ENCODE measurements at regions of chrX and their contacts with region 1.

Region 1: DNA sequence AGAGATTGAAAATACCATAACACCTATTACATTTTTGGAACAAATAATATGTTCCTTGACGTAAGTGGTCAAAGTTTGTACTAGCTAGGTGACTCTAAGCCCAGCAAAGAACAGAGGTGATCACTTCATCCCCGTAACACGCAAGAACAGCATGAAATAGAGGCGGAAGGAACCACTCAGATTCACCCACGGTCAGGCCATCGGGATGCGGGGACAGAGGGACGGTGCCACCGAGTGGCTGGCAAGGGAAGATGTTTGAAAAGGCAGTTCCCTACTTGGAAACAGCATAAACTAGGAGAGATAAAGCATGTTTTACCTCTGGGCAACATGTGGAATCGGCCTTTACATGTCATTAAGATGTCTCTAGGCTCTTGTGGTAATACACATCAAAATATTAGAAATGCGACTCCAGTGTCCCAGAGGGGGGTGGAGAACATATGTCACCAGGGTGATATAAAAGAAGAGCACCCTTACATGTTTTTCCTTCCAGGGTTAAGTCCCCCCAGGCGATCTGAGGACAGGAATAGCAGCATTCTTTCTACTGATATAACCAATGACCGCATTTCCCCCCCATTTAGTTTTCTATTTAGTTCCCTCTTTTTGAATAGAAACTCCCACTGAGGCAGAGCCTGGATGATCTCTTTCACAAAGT is 84.0 kb downstream of the PHKA2 start:
- DNase-seq: peak; percentile 48
- CTCF ChIP-seq: no peak

Region 2: DNA sequence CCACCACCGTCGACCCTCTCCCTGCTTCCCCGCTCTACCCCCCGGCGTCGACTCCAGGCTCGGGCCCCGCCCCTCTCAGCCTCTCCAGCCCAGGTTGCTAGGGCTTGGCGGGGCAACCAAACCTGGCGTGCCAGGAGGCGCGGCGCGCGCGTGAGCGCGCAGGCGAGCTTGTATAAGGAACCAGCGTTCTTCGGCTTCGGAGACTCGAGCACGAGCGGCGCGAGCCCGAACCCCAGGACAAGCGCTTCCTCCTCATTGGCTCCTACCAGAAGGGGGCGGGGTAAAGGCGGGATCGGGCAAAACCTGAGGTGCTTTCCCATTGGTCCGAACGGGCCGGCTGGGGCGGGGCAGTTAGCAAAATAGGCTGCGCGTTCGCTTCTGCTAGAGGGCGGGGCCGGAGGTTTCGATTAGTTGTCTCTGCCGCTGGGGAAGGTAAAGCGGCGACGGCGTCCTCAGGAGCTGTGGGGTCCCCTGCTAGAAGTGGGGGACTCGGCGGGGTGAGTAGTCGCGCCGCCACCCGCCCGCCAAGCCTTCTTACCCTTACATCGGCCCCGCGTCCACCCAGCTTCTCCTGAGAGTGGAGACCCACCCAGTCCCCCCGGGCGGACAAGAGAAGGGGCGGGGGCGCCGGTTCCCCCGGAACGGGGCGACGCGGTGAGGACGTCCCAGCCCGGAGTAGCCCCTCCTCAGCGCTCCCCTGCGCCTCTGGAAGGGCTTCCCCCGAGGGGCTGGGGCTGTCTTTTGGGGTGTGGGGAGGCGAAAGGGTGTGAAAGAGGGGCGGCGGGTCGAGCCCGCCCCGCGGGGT is 474.5 kb before region 1 on chrX and contains the start of gene CDKL5:
- in situ Hi-C with region 1: loop called (anchors 10 kb)
- DNase-seq: peak; percentile 90
- CTCF ChIP-seq: no peak

Region 3: GRCh38 chrX:18687856-18688495 is 211.9 kb before region 1 on chrX:
- in situ Hi-C with region 1: no loop called
- DNase-seq: no peak
- CTCF ChIP-seq: no peak